ENCODE measurements at regions of chr3 and their contacts with region 1.

Region 1: DNA sequence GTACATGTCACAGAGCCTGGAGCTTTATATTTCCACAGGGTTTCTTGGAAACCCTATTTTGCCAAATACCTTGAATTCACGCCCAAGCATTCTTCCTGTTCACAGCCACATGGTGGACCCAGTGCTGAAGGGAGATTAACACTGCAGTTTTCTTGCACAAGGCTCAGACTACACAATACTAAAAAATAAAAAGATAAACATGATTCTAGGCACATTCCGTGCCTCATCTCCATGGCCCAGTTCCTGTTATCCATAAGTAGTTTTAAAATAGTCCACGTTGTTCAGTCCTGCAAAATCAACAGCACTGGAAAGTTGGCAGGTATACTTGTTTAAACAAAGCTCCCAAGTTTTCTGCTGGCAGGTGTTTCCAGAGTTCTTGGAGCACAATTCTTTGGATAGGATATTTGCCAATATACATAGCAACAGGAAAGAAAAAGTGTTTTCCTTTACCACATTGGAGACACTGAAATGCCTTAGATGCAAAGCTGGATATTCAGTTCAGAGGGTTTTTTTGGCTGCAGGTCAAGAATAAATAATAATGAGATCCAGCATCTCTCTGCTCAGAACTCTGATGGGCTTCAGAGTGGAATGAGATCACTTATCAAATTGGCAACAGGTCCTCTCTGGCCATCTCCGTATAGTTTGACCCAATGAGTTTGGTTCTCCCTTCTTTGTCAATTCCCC is 88.1 kb upstream of the TGFBR2 start:
- DNase-seq: no peak
- ATAC-seq: peak; percentile 93

Region 2: DNA sequence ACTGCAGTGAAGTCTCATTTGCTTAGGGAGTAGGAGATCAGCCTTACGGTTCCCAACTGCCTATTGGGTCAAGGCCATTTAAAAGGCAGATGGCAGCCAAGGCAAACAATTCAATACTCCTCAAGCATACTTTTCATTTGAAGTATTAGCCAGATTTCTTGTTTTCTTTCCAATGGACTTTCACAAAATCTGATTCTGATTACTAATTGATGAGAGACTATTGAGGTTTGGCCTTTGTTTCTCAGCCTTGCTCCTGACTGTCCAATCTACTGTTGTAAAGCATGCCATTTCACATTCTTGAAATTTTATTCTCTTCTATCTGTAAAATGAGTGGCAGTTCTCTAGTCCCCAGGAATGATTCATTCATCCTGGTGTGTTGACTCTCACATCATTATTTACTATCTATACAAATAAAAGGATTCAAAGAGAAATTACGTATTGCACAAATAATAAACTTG is 78.1 kb before region 1 on chr3:
- intact Hi-C with region 1: loop called (anchors 5 kb)
- DNase-seq: no peak
- ATAC-seq: no peak

Region 3: GRCh38 chr3:30597131-30597768 is 78.9 kb after region 1 on chr3:
- intact Hi-C with region 1: loop called (anchors 2 kb)
- DNase-seq: no peak
- ATAC-seq: peak; percentile 95

Region 4: DNA sequence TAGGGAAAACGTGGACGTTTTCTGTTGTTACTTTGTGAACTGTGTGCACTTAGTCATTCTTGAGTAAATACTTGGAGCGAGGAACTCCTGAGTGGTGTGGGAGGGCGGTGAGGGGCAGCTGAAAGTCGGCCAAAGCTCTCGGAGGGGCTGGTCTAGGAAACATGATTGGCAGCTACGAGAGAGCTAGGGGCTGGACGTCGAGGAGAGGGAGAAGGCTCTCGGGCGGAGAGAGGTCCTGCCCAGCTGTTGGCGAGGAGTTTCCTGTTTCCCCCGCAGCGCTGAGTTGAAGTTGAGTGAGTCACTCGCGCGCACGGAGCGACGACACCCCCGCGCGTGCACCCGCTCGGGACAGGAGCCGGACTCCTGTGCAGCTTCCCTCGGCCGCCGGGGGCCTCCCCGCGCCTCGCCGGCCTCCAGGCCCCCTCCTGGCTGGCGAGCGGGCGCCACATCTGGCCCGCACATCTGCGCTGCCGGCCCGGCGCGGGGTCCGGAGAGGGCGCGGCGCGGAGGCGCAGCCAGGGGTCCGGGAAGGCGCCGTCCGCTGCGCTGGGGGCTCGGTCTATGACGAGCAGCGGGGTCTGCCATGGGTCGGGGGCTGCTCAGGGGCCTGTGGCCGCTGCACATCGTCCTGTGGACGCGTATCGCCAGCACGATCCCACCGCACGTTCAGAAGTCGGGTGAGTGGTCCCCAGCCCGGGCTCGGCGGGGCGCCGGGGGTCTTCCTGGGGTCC is 88.1 kb after region 1 on chr3 and contains the start of gene TGFBR2:
- intact Hi-C with region 1: loop called (anchors 2 kb)
- DNase-seq: peak; percentile 98
- ATAC-seq: peak; percentile 97
- total RNA-seq, gene TGFBR2: 186 TPM

Measured in Right ventricle myocardium inferior (tissue), 1 donor.